ENCODE measurements at regions of chrX and their contacts with region 1.

Region 1: DNA sequence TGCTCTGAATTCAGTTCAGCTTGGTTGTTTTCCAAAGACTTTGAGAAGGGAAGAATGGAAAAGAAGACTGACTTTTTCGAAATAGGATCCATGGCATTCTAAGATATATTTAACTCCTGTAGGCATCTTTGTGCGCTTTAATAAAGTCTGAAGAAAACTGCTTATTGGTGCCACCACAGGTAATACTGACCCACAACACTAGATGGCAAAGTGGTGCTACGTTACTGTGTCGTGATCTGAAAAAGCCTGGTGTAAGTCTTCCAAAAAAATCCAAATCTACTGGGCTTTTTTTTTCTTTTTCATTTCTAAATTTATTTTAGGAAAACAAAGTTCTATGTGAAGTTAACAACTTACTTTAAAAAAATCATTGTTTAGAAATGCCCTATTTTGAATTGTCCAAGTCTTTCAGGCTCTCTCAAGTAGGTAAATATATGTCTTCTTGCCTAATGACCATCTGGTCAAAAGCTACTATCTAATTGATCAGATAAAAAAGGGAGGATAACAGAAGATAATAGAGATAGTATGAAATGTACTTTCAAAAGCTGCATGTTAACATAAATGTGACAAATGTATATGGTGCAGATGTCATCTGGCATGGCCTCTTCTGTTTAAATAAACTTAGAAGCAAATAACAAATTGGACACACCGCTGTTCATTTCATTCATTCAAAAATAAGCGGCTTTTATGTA is 47.0 kb upstream of the MID1IP1 start:
- DNase-seq: peak in 8 of 14 experiments; percentile 1 to 68 (median 27)
- ATAC-seq: no peak
- H3K4me3 ChIP-seq: no peak overlapping the region
- H3K4me3 Mint-ChIP-seq: no peak overlapping the region
- H3K27ac ChIP-seq: no peak overlapping the region
- H3K27ac Mint-ChIP-seq: no peak overlapping the region
- H3K4me1 ChIP-seq: no peaks in the 10 kb centered on the region
- H3K4me1 Mint-ChIP-seq: no peaks in the 10 kb centered on the region
- H3K27me3 ChIP-seq: peaks cover 0 to 2% of the 10 kb centered on the region in 2 experiments
- H3K27me3 Mint-ChIP-seq: no peaks in the 10 kb centered on the region
- CTCF ChIP-seq: peak; percentile 61

Region 2: GRCh38 chrX:38232079-38232686 is 522.1 kb before region 1 on chrX:
- CTCF ChIA-PET with region 1: no interaction called
- POLR2A ChIA-PET with region 1: no interaction called
- intact Hi-C with region 1: no loop called
- DNase-seq: no peak
- ATAC-seq: no peak
- H3K4me3 ChIP-seq: no peak overlapping the region
- H3K4me3 Mint-ChIP-seq: no peak overlapping the region
- H3K27ac ChIP-seq: no peak overlapping the region
- H3K27ac Mint-ChIP-seq: no peak overlapping the region
- H3K4me1 ChIP-seq: no peaks in the 10 kb centered on the region
- H3K4me1 Mint-ChIP-seq: no peaks in the 10 kb centered on the region
- H3K27me3 ChIP-seq: no peaks in the 10 kb centered on the region
- H3K27me3 Mint-ChIP-seq: peaks cover 10% of the 10 kb centered on the region
- CTCF ChIP-seq: no peak

Region 3: DNA sequence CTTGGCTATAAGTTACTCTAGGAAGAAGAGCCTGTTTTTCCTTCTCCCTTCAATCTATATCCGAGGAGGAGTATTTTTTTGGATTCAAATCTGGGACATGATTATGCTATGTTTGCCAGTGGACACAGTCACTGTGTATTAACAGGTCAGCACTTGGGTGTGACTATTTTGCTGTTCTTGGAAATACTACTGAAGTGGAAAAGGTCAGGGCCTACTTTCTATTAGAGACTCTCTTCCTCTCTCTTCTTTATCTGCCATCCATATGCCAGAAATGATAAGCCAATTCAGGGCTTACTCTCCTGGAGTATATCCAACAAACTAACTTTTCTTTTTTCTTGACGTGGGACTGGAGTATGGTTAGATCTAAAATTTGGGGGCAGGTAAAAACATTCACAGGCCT is 87.5 kb after region 1 on chrX:
- CTCF ChIA-PET with region 1: no interaction called
- POLR2A ChIA-PET with region 1: no interaction called
- intact Hi-C with region 1: no loop called
- DNase-seq: no peak
- ATAC-seq: no peak
- H3K4me3 ChIP-seq: no peak overlapping the region
- H3K4me3 Mint-ChIP-seq: no peak overlapping the region
- H3K27ac ChIP-seq: no peak overlapping the region
- H3K27ac Mint-ChIP-seq: no peak overlapping the region
- H3K4me1 ChIP-seq: no peaks in the 10 kb centered on the region
- H3K4me1 Mint-ChIP-seq: peaks cover 14% of the 10 kb centered on the region
- H3K27me3 ChIP-seq: no peaks in the 10 kb centered on the region
- H3K27me3 Mint-ChIP-seq: no peaks in the 10 kb centered on the region
- CTCF ChIP-seq: no peak

Region 4: DNA sequence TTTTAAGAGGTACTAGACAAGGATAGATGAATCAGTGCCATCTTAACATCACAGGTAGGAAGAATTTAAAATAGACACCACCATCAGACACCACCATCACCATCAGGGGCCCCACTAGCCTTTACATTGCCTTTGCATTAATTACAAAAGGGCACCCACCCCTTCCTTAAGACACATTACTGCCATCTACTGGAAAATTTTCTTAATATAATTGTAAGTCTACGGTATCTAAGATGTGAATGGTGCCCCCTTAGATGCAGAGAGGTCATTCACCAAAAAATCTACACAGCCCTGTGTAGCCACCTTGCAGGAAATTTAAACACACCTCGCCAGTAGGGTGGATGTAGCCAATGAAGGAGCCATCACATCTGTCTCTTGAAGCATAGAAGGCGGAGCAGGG is 231.1 kb after region 1 on chrX:
- CTCF ChIA-PET with region 1: no interaction called
- POLR2A ChIA-PET with region 1: no interaction called
- intact Hi-C with region 1: loop called in 1 of 2 experiments (anchors 1 kb)
- DNase-seq: peak in 4 of 14 experiments; percentile 3 to 47 (median 41)
- ATAC-seq: no peak
- H3K4me3 ChIP-seq: no peak overlapping the region
- H3K4me3 Mint-ChIP-seq: no peak overlapping the region
- H3K27ac ChIP-seq: no peak overlapping the region
- H3K27ac Mint-ChIP-seq: no peak overlapping the region
- H3K4me1 ChIP-seq: no peaks in the 10 kb centered on the region
- H3K4me1 Mint-ChIP-seq: peaks cover 6% of the 10 kb centered on the region
- H3K27me3 ChIP-seq: no peaks in the 10 kb centered on the region
- H3K27me3 Mint-ChIP-seq: no peaks in the 10 kb centered on the region
- CTCF ChIP-seq: peak; percentile 42

Region 5: GRCh38 chrX:39149761-39150160 is 395.5 kb after region 1 on chrX:
- CTCF ChIA-PET with region 1: no interaction called
- POLR2A ChIA-PET with region 1: no interaction called
- intact Hi-C with region 1: loop called in 1 of 2 experiments (anchors 5 kb)
- DNase-seq: peak; percentile 39 to 74 (median 50)
- ATAC-seq: no peak
- H3K4me3 ChIP-seq: no peak overlapping the region
- H3K4me3 Mint-ChIP-seq: no peak overlapping the region
- H3K27ac ChIP-seq: no peak overlapping the region
- H3K27ac Mint-ChIP-seq: no peak overlapping the region
- H3K4me1 ChIP-seq: no peaks in the 10 kb centered on the region
- H3K4me1 Mint-ChIP-seq: peaks cover 3% of the 10 kb centered on the region
- H3K27me3 ChIP-seq: no peaks in the 10 kb centered on the region
- H3K27me3 Mint-ChIP-seq: no peaks in the 10 kb centered on the region
- CTCF ChIP-seq: peak; percentile 66

Region 6: DNA sequence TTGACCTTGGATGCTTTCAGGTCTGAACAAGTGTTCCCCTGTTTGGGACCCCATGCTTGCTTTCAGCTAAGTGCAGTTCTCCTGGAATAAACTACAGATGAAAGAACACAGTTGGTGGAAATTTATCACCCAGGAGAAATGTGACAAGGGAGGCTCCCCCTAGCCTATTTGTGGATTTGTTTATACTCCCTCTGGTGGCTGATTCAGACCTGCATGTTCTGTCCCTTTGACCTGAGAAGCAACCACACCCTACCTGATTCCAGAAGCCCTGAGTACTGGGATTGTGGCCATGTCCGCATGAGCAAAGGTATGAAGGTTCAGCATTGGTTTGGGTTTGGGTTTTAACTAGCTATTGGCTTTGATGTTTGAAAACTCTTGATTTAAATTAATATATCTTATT is 487.9 kb after region 1 on chrX:
- CTCF ChIA-PET with region 1: no interaction called
- POLR2A ChIA-PET with region 1: no interaction called
- intact Hi-C with region 1: loop called in 1 of 2 experiments (anchors 5 kb)
- DNase-seq: peak in 5 of 14 experiments; percentile 3 to 58 (median 40)
- ATAC-seq: no peak
- H3K4me3 ChIP-seq: no peak overlapping the region
- H3K4me3 Mint-ChIP-seq: no peak overlapping the region
- H3K27ac ChIP-seq: no peak overlapping the region
- H3K27ac Mint-ChIP-seq: no peak overlapping the region
- H3K4me1 ChIP-seq: no peaks in the 10 kb centered on the region
- H3K4me1 Mint-ChIP-seq: no peaks in the 10 kb centered on the region
- H3K27me3 ChIP-seq: no peaks in the 10 kb centered on the region
- H3K27me3 Mint-ChIP-seq: no peaks in the 10 kb centered on the region
- CTCF ChIP-seq: peak; percentile 46